Motor neuron (in vitro differentiated cells): ENCODE measurements at regions of chr17 and their contacts with region 1.

Region 1: GRCh38 chr17:47229535-47230443 is 20.6 kb downstream of the MYL4 start:
- ATAC-seq: peak; percentile 89 to 99 (median 93)
- H3K4me3 ChIP-seq: no peak overlapping the region
- H3K27ac ChIP-seq: no peak overlapping the region
- H3K4me1 ChIP-seq: peaks cover 0 to 7% of the 10 kb centered on the region in 2 donors

Region 2: DNA sequence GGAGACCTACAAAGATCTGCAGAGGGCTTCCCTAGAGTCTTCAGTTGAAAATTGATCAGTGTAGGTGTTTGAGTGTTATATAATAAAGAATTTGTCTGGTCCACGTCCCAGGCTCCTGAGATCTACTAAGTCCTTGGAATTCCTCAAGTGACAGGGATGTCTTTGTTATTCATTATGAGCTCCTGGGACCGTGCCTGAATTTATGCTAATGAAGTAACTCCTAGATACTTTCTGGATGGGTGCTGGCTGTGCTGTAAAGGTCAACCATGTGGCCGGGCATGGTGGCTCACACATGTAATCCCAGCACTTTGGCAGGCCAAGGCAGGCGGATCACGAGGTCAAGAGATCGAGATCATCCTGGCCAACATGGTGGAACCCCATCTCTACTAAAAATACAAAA is 84.4 kb before region 1 on chr17:
- in situ Hi-C with region 1: no loop called
- ATAC-seq: no peak
- H3K4me3 ChIP-seq: no peak overlapping the region
- H3K27ac ChIP-seq: no peak overlapping the region
- H3K4me1 ChIP-seq: no peaks in the 10 kb centered on the region

Region 3: GRCh38 chr17:47310186-47310970 is 80.6 kb after region 1 on chr17:
- in situ Hi-C with region 1: loop called in 3 of 9 experiments (anchors 5 to 25 kb)
- ATAC-seq: no peak
- H3K4me3 ChIP-seq: no peak overlapping the region
- H3K27ac ChIP-seq: no peak overlapping the region
- H3K4me1 ChIP-seq: peaks cover 0 to under 1% of the 10 kb centered on the region in 2 donors

Region 4: DNA sequence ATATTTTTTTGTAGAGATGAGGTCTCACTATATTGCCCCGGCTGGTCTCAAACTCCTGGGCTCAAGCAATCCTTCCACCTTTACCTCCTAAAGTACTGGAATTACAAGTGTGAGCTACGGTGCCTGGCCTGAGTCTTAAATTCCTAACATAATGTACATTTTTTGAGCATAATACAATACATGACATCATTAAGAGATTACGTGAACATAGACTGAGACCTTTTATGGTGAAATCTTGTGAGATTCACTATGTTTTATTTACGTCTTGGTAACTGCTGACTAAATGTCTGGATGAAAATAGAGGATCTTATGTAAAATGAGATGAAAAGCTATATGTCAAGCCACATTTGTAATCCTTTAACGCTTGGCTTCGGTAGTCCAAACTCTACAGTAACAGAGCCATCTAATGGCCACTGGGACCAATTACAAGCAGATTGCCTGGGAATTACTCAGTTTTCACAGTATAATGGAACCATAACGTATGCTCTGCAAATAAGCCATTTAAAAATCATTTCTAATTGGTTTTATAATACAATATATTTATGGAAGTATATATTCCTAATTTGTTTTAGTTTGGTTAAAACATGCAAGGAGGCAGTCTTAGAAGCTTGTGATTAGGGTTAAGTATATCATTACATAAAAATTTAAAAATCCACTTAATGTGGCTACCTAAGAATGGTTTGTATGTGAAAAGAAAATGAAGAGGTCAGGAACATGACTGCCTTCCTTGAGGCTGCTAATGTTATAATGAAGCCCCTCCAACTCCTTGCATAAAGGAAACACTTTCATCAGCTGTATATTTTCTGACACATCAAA is 85.9 kb after region 1 on chr17:
- in situ Hi-C with region 1: loop called in 3 of 9 experiments (anchors 5 to 25 kb)
- ATAC-seq: peak; percentile 46 to 86 (median 72)
- H3K4me3 ChIP-seq: no peak overlapping the region
- H3K27ac ChIP-seq: no peak overlapping the region
- H3K4me1 ChIP-seq: peaks cover 0 to 3% of the 10 kb centered on the region in 2 donors